Right lobe of liver (tissue), 6 donors: ENCODE measurements at regions of chr12 and their contacts with region 1.

Region 1: DNA sequence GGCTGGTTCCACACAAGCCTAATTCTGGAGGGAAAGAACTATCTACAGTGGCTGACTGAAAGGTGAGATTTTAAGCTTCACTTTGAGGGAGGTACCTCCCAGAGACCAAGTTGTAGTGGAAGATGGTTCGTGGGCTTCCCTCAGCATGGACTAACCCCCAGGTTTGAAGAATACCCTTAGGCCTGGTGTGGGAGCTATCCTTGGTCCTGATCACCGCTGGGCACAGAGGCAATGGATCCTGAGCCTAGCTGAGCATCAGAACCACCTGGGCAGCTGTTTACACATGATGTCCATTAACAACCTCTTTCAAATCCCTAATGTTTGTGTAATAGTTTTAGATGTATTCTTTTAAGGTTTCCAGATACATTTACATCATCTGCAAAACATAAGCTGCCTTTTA is 10.3 kb downstream of the DAO start:
- DNase-seq: no peak
- ATAC-seq: no peak
- H3K4me3 ChIP-seq: no peak overlapping the region
- H3K27ac ChIP-seq: no peak overlapping the region
- H3K4me1 ChIP-seq: peaks cover 0 to 35% (median 15%) of the 10 kb centered on the region in 4 donors
- H3K27me3 ChIP-seq: no peaks in the 10 kb centered on the region
- CTCF ChIP-seq: no peak
- POLR2A ChIP-seq: no peak

Region 2: GRCh38 chr12:108948367-108948766 is 58.2 kb after region 1 on chr12:
- intact Hi-C with region 1: loop called in 1 of 2 experiments (anchors 10 kb)
- DNase-seq: no peak
- ATAC-seq: no peak
- H3K4me3 ChIP-seq: no peak overlapping the region
- H3K27ac ChIP-seq: no peak overlapping the region
- H3K4me1 ChIP-seq: peaks cover 0 to 5% (median 3%) of the 10 kb centered on the region in 4 donors
- H3K27me3 ChIP-seq: no peaks in the 10 kb centered on the region
- CTCF ChIP-seq: no peak
- POLR2A ChIP-seq: no peak